ENCODE measurements at regions of chr5 and their contacts with region 1.

Region 1: GRCh38 chr5:73066466-73066865 is 53.9 kb upstream of the TMEM171 start:
- DNase-seq: no peak
- ATAC-seq: no peak
- H3K4me3 ChIP-seq: no peak overlapping the region
- H3K27ac ChIP-seq: no peak overlapping the region
- H3K4me1 ChIP-seq: no peaks in the 10 kb centered on the region
- H3K27me3 ChIP-seq: no peaks in the 10 kb centered on the region
- CTCF ChIP-seq: no peak
- POLR2A ChIP-seq: no peak

Region 2: GRCh38 chr5:73152411-73153388 is 86.2 kb after region 1 on chr5:
- intact Hi-C with region 1: loop called in 1 of 2 experiments (anchors 10 kb)
- DNase-seq: no peak
- ATAC-seq: peak; percentile 65 to 84 (median 70)
- H3K4me3 ChIP-seq: no peak overlapping the region
- H3K27ac ChIP-seq: no peak overlapping the region
- H3K4me1 ChIP-seq: no peaks in the 10 kb centered on the region
- H3K27me3 ChIP-seq: no peaks in the 10 kb centered on the region
- CTCF ChIP-seq: peak; percentile 27 to 48 (median 33)
- POLR2A ChIP-seq: no peak

Measured in right lobe of liver (tissue), 6 donors.